Left ventricle myocardium inferior (tissue), 1 donor: ENCODE measurements at regions of chr3 and their contacts with region 1.

Region 1: GRCh38 chr3:196198771-196199753 is 12.1 kb downstream of the ZDHHC19 start:
- DNase-seq: no peak
- H3K4me3 ChIP-seq: no peak overlapping the region
- H3K27ac ChIP-seq: no peak overlapping the region
- H3K4me1 ChIP-seq: peaks cover 13% of the 10 kb centered on the region
- H3K27me3 ChIP-seq: peaks cover 19% of the 10 kb centered on the region
- CTCF ChIP-seq: no peak

Region 2: DNA sequence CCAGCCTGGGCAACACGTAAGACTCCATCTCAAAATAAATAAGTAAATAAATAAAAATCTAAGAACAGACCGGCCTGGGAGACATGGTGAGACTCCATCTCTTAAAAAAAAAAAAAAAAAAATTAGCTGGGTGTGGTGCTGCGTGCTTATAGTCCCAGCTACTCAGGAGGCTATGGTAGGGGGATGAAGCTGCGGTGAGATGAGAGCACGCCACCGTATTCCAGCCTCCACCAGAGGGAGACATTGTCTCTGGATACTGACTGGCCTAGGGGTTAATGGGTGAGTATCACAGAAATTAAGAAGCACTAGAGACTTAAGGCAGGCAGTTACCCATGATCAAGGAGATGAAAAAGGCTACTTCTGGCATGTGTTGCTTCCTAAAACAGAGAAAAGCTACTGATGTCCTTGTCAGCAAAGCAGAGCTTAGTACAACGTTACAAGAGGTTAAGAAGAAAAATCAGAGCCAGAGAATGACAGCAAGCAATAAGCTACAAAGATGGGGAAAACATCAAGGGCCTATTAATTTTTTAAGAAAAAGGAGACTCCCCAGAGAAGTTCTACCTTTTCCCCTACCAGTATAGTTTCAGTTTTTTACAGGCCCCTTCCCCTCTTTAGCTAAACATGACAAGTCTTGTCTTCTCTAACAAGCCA is 125.7 kb before region 1 on chr3:
- intact Hi-C with region 1: loop called (anchors 5 kb)
- DNase-seq: peak; percentile 34
- H3K4me3 ChIP-seq: no peak overlapping the region
- H3K27ac ChIP-seq: no peak overlapping the region
- H3K4me1 ChIP-seq: peaks cover 27% of the 10 kb centered on the region
- H3K27me3 ChIP-seq: no peaks in the 10 kb centered on the region
- CTCF ChIP-seq: peak; percentile 80

Region 3: DNA sequence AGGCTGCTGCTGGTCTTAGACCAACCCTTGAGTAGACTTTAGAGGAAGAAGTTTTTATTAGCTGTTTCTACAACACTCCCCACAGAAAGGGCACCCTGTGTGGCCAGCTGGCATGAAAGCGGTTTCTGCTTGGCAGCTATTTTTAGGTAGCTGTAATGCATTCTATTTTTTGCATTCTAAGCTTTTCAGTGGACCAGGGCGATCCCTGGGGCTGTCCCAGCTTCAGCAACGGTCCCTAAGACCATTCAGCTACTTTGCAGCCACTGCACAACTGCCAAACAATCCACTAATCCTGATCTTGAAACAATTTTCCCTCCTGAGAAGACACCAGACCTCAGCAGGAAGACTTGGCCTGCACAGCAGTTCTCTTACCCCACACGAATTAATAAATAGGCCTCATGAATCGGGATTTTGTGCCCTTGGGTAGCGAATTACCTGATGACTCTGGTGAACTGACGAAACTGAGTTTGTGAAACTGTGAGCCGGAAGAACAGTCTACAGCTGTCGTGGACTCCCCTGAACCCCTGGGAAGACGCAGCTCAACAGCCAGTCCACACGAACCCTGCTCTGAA is 102.6 kb before region 1 on chr3:
- intact Hi-C with region 1: no loop called
- DNase-seq: peak; percentile 54
- H3K4me3 ChIP-seq: peak overlapping the region; percentile 41
- H3K27ac ChIP-seq: peak overlapping the region; percentile 83
- H3K4me1 ChIP-seq: peaks cover 8% of the 10 kb centered on the region
- H3K27me3 ChIP-seq: no peaks in the 10 kb centered on the region
- CTCF ChIP-seq: no peak